HepG2 (cell line): ENCODE measurements at regions of chr22 and their contacts with region 1.

Region 1: DNA sequence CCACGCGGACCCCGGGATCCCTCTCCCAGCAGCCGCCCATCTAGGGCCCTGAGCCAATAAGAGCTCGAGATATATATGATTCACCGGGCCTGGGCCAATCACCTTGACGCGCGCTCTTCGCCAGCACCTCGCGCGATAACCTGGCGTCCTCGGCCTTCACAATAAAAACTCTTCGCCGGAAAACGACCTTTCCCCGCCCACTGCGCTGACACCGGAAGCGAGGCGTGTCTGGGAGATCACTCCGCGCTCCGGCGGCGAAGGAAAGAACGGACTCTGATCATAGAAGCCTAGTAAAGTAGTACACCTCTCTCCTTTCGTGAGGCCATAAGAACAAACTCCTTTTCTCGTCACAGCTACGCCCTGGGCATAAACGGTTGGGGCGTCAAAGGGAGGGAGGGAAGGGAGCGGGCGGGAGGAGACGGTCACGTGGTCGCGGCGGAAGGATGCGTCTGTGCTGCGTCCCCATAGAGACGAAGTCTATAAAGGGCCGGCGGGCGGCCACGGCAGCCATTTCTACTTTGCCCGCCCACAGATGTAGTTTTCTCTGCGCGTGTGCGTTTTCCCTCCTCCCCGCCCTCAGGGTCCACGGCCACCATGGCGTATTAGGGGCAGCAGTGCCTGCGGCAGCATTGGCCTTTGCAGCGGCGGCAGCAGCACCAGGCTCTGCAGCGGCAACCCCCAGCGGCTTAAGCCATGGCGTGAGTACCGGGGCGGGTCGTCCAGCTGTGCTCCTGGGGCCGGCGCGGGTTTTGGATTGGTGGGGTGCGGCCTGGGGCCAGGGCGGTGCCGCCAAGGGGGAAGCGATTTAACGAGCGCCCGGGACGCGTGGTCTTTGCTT is at the start of gene ATF4:
- DNase-seq: peak; percentile 98
- ATAC-seq: peak; percentile 87
- H3K4me3 ChIP-seq: peak within 1 kb of the TSS; percentile 98 to 100 (median 100)
- H3K27ac ChIP-seq: peak within 1 kb of the TSS; percentile 100
- H3K4me1 ChIP-seq: peaks cover 50% of the 10 kb centered on the region
- H3K27me3 ChIP-seq: no peaks in the 10 kb centered on the region; a peak in 1 of 5 replicates
- CTCF ChIP-seq: no peak
- EP300 ChIP-seq: no peak
- POLR2A ChIP-seq: peak; percentile 97 to 98
- RAD21 ChIP-seq: no peak
- total RNA-seq, gene ATF4: 442 and 486 TPM in 2 replicates

Region 2: DNA sequence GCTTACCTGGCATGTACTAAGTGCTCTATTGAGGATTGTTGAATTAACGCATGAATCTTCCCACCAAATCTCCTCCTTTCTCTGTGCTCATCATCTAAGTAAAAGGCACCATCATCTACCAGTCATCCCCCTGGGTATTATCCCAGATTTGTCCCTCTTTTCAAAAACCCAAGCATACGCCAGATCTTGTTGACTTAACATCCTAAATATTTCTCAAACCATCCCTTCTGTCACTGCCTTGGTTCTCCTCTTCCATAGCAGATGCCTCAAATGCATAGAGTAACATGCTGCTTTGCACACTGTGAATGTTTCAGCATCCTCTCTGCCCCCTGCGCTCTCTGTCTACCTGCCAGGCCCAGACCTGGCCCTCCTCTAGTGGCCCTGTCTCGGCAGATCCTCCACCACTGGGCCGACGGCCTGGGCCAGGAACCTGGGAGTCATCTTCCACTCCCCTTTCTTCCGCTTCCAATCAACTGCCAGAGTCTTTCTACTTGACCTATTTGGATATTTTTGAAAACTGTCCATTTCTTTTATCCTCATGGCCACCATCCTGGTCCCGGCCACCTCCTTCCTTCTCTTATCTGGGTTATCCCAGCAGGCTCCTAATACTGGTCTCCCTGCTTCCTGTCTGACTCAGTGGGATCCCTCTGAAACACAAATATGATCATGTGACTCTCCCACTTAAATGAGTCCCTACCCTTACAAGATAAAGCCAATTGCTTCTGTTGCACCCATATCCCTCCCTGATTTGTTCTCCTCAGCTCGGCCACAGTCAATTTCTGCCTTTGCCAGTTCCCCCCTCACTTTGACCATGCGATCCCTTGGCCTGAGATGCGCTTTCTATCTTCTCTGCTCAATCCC is 124.1 kb before region 1 on chr22:
- CTCF ChIA-PET with region 1: no interaction called
- POLR2A ChIA-PET with region 1: interaction called, 10 read pairs
- in situ Hi-C with region 1: no loop called
- intact Hi-C with region 1: no loop called
- DNase-seq: no peak
- ATAC-seq: no peak
- H3K4me3 ChIP-seq: no peak overlapping the region
- H3K27ac ChIP-seq: no peak overlapping the region
- H3K4me1 ChIP-seq: peaks cover 10% of the 10 kb centered on the region
- H3K27me3 ChIP-seq: no peaks in the 10 kb centered on the region; a peak in 1 of 5 replicates
- CTCF ChIP-seq: no peak
- EP300 ChIP-seq: no peak
- POLR2A ChIP-seq: no peak
- RAD21 ChIP-seq: no peak

Region 3: DNA sequence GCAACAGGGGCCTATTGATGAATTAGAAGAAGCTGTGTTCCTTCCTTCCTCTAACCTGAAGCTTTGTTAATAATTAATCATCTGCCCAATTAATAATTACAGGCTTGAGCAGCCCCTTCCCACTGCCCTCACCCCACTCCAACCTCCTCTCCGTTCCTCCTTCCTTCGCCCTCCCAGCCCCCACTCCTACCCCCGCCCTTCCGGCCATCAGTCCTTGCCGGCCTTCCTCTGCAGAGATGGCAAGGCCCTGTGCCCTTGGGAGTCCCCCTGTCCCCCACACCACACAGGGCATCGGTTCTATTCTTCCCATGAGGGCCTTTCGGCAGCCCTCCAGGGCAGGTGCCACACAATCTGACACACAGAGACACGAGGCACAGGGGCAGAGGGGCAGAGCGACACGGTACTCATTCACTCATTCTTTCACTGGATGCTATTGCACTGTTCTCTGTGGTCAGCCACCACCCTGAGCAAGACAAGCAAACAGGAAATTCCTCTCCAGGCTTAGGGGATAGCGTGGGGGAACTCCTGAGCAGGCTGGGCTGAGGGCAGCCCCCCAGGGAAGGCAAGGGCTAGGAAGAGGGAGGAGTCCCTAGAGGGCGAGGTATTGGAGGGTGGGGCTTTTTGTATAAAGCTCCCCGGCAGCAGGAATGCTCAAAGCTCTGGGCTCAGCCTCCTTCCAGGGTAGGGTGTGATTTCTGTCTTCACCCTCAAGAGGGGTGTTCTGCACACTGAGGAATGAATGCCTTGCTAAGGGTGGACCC is 48.7 kb before region 1 on chr22:
- CTCF ChIA-PET with region 1: no interaction called
- POLR2A ChIA-PET with region 1: interaction called, 16 read pairs
- in situ Hi-C with region 1: no loop called
- intact Hi-C with region 1: no loop called
- DNase-seq: no peak
- ATAC-seq: peak; percentile 8; the same call in 2 of the 3 replicates
- H3K4me3 ChIP-seq: peak overlapping the region; percentile 37 to 70 (median 43)
- H3K27ac ChIP-seq: no peak overlapping the region
- H3K4me1 ChIP-seq: peaks cover 83% of the 10 kb centered on the region
- H3K27me3 ChIP-seq: peaks cover 1 to 29% of the 10 kb centered on the region in 2 experiments; a peak in 3 of 5 replicates
- CTCF ChIP-seq: no peak
- EP300 ChIP-seq: no peak
- POLR2A ChIP-seq: no peak
- RAD21 ChIP-seq: no peak

Region 4: GRCh38 chr22:39496131-39496838 is 24.0 kb before region 1 on chr22:
- CTCF ChIA-PET with region 1: interaction called, 5 read pairs
- POLR2A ChIA-PET with region 1: interaction called, 167 read pairs
- in situ Hi-C with region 1: no loop called
- intact Hi-C with region 1: no loop called
- DNase-seq: peak; percentile 74
- ATAC-seq: peak; percentile 88
- H3K4me3 ChIP-seq: peak overlapping the region in 1 of 3 experiments; percentile 57; a peak in 2 of 6 replicates
- H3K27ac ChIP-seq: no peak overlapping the region
- H3K4me1 ChIP-seq: peaks cover 51% of the 10 kb centered on the region
- H3K27me3 ChIP-seq: peaks cover 0 to 2% of the 10 kb centered on the region in 2 experiments; a peak in 1 of 5 replicates
- CTCF ChIP-seq: peak; percentile 84
- EP300 ChIP-seq: no peak
- POLR2A ChIP-seq: no peak
- RAD21 ChIP-seq: 0 out of 2 replicates have a peak, but pooled peaks have one; percentile 18

Region 5: DNA sequence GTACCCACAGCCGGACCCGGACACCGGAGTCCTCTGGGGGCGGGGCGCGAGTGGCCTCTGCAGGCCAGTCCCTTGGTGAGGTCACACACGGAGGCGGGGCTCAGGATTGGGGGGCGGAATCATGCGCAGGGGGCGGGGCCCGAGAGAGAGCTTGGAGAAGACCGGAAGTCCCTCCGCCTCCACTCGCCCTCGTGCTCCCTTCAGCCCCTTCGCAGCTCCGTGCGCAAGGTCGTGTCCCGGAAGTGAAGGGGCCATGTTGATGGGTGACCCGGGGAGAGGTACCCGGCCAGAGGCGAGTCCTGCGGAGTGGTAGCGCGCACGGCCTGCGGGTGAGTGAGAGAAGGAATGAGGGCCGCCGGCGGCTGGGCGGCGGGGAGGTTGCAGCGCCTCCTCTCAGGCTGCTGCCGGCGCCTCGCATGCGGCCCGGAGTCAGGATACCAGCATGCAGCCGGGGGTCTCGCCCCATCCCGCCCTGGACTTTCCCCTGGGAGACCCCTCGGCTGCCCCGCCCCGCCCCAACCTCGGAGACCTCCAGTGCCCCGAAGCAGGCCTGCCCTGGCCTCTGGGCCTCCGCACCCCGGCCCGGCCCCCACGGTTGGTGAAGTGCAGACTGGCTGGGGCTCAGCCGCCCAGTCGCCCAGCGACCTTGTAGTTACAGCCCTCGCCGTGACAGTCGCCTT is 18.0 kb before region 1 on chr22 and contains the start of gene MIEF1:
- CTCF ChIA-PET with region 1: no interaction called
- POLR2A ChIA-PET with region 1: interaction called, 167 read pairs
- in situ Hi-C with region 1: no loop called
- intact Hi-C with region 1: loop called (anchors 2 kb)
- DNase-seq: peak; percentile 96
- ATAC-seq: peak; percentile 95
- H3K4me3 ChIP-seq: peak within 1 kb of the TSS; percentile 80 to 93 (median 91)
- H3K27ac ChIP-seq: peak within 1 kb of the TSS; percentile 94
- H3K4me1 ChIP-seq: peaks cover 64% of the 10 kb centered on the region
- H3K27me3 ChIP-seq: no peaks in the 10 kb centered on the region
- CTCF ChIP-seq: no peak; the same call in 1 of the 2 replicates
- EP300 ChIP-seq: no peak
- POLR2A ChIP-seq: peak; percentile 71 to 85
- RAD21 ChIP-seq: no peak
- total RNA-seq, gene MIEF1: 34.8 and 41.4 TPM in 2 replicates